ENCODE measurements at regions of chr13 and their contacts with region 1.

Region 1: DNA sequence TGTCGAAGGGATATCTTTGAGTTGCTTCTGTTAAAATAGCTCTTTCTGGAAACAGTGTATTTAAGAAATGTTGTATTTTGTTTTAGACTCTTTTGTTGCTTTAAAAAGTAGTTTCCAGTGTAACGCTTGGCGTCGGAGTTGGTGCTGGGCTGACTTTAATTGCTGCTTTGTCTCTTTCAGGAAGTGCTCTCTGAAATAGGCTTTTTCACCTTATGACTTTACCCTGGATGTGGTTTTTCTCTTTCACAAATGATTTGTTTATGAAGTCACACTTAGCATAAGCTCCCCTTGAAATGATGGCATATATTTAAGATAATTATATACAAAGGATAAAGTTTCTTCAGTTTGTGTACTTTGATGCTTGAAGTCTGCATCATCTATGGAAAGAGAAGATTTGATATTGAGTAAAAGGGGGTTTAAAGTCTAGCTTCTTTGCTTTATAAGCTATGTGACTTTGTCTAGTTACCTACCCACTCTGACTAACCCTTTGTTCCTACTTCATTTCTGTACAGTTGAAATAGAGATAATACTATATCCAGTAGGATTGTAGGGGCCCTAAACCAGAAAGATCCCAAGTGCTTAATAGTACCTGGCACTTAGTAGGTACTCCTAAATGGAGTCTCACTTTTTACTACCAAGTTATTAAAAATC is at the start of gene GPR18:
- DNase-seq: peak; percentile 62
- ATAC-seq: peak; percentile 88
- H3K4me3 Mint-ChIP-seq: peak within 1 kb of the TSS; percentile 80
- H3K27ac Mint-ChIP-seq: peak within 1 kb of the TSS; percentile 95
- H3K4me1 Mint-ChIP-seq: peaks cover 76% of the 10 kb centered on the region
- H3K27me3 Mint-ChIP-seq: no peaks in the 10 kb centered on the region
- total RNA-seq, gene GPR18: 6.0 to 9.5 TPM

Region 2: DNA sequence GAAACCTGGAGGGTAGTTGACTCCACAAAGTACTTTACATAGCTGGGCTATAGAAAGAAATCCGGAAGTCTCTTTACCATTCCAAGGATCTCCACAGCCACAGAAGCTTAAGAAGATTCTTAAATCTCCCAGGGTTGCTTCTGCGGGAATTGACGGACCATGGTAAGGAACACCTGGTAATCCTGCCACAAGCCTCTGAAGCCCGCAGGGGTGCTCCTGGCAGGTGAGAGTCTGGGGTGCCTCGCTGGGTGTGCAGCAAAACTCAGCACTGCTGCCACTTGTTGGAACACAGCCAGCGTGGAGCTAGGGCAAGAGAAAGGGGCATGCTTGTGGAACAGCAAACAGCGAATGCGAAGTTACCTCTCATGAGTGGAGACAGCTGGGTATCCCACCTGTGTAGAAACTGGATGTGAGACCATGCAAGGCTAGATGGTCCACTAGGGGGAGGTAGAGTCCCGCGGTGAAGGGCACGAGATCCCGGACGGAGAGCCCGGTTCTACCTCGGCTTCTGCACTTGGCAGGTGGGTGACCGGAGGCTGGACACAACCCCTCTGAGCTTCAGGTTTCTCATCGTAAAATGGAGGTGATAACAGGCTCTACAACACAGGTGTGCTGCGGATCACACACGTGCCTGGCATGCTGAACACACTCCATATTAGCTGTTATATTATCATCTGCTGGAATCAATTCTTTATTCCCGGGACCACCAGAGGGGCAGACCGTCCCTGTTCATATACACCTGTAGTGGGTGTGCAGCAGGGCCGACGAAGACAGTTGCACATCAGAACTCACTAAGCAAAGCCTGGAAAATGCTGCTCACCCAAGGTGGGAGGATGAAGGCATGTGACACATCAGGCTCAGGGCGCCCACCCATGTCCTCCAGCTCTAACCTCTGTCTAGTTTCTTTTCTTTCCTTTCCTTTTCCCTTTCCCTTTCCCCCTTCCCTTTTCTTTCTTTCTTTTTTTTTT is 81.7 kb before region 1 on chr13:
- CTCF ChIA-PET with region 1: interaction called, 169 read pairs
- POLR2A ChIA-PET with region 1: interaction called, 6 read pairs
- intact Hi-C with region 1: loop called in 1 of 2 experiments (anchors 2 kb)
- DNase-seq: peak; percentile 86
- ATAC-seq: peak; percentile 91
- H3K4me3 Mint-ChIP-seq: peak overlapping the region; percentile 51
- H3K27ac Mint-ChIP-seq: no peak overlapping the region
- H3K4me1 Mint-ChIP-seq: peaks cover 41% of the 10 kb centered on the region
- H3K27me3 Mint-ChIP-seq: no peaks in the 10 kb centered on the region

Region 3: DNA sequence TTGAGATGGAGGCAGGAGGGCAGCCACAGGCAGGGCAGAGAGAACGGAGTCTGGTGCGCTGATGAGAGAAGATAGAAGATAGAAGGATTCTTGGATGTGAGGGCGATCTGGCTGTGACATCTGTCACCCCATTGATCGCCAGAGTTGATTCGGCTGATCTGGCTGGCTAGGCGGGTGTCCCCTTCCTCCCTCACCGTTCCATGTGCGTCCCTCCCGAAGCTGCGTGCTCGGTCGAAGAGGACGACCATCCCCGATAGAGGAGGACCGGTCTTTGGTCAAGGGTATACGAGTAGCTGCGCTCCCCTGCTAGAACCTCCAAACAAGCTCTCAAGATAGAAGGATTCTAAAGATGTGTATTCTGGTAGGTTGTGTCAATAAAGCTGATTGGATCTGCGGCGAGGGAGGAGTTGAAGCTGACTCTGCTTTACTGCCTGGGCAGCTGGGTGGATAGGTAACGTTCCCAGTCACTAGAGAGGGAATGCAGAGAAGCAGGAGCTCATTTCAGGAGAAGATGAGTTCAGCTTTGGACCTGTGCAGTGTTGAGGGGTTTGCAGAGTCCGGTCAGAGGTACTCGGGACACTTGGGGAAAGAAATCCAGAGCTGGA is 52.6 kb before region 1 on chr13:
- CTCF ChIA-PET with region 1: interaction called, 19 read pairs
- POLR2A ChIA-PET with region 1: interaction called, 10 read pairs
- intact Hi-C with region 1: loop called (anchors 1 kb)
- DNase-seq: no peak
- ATAC-seq: no peak
- H3K4me3 Mint-ChIP-seq: peak overlapping the region; percentile 58
- H3K27ac Mint-ChIP-seq: peak overlapping the region; percentile 84
- H3K4me1 Mint-ChIP-seq: peaks cover 76% of the 10 kb centered on the region
- H3K27me3 Mint-ChIP-seq: no peaks in the 10 kb centered on the region

Region 4: DNA sequence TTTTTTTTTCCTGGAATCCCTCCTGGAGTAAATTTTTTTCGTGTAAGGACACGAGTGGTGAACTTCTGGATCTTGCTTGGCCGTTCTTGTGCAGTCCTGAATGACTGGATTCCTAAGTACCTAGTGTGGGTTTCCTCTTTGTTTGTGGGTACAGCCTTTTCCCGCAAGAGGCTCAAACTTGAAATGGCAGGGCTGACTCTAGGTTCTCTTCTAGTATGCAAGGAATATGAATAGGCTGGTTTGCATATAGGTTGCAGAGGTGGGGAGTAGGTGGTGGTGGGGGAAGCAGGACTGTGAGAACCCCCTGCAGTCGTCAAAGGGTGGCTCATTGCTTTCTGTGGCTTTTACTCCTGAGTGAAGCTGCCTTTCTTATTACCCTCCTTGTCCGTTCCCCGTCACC is 44.1 kb before region 1 on chr13:
- CTCF ChIA-PET with region 1: interaction called, 6 read pairs
- POLR2A ChIA-PET with region 1: interaction called, 8 read pairs
- intact Hi-C with region 1: loop called (anchors 1 kb)
- DNase-seq: peak; percentile 82
- ATAC-seq: peak; percentile 80
- H3K4me3 Mint-ChIP-seq: peak overlapping the region; percentile 74
- H3K27ac Mint-ChIP-seq: peak overlapping the region; percentile 87
- H3K4me1 Mint-ChIP-seq: peaks cover 79% of the 10 kb centered on the region
- H3K27me3 Mint-ChIP-seq: no peaks in the 10 kb centered on the region

Region 5: DNA sequence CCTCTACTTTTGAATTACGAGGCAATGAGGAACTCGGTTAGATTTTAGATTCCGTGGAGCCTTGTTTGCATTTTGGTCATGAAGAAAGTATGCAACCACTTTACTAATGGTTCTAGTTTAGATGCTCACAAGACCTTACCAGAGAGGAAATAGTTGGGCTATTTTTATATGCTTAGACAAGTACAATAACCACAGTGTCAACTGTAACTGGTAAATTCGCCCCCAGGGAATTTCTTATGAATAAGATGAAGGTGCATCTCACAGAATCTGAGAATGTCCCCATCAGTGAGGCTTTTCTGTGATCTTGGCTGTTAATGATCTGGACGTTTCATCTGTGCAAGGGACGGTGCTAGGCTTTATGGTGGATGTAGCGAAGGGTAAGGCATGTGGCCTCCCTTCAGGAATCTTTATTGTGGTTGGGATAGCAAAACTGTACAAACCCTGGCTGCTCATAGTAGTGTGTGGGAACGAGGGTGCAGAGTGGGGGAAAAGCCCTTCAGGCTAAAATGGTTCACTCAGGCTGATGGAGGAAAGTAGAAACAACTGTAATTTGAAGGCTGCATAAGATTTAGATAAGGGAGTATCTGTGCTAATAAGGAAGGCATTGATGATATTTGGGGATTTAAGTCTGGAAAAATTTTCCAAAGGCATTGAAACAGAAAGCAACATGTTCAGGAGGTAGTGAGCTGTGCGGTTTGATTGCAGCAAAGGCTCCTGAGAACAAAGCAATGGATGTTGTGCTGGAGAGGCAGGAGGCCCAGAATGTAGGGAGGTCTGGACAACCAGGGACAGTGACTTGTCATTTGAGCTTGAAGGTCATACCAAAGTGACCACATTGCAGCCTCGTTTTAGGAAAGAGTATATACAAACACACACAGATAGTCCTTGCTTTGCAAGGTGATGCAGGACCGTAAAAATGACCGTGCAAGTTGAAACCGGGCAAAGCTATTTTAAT is 29.3 kb before region 1 on chr13:
- CTCF ChIA-PET with region 1: interaction called, 22 read pairs
- POLR2A ChIA-PET with region 1: interaction called, 5 read pairs
- intact Hi-C with region 1: loop called in 1 of 2 experiments (anchors 2 kb)
- DNase-seq: no peak
- ATAC-seq: peak; percentile 67
- H3K4me3 Mint-ChIP-seq: peak overlapping the region; percentile 51
- H3K27ac Mint-ChIP-seq: peak overlapping the region; percentile 89
- H3K4me1 Mint-ChIP-seq: peaks cover 81% of the 10 kb centered on the region
- H3K27me3 Mint-ChIP-seq: no peaks in the 10 kb centered on the region

Region 6: GRCh38 chr13:99237981-99238662 is 20.2 kb before region 1 on chr13:
- CTCF ChIA-PET with region 1: interaction called, 7 read pairs
- POLR2A ChIA-PET with region 1: interaction called, 4 read pairs
- intact Hi-C with region 1: loop called in 1 of 2 experiments (anchors 2 kb)
- DNase-seq: peak; percentile 58
- ATAC-seq: peak; percentile 88
- H3K4me3 Mint-ChIP-seq: peak overlapping the region; percentile 64
- H3K27ac Mint-ChIP-seq: peak overlapping the region; percentile 92
- H3K4me1 Mint-ChIP-seq: peaks cover 60% of the 10 kb centered on the region
- H3K27me3 Mint-ChIP-seq: no peaks in the 10 kb centered on the region

Region 7: GRCh38 chr13:99246100-99246499 is 12.2 kb before region 1 on chr13:
- CTCF ChIA-PET with region 1: interaction called, 14 read pairs
- POLR2A ChIA-PET with region 1: no interaction called
- intact Hi-C with region 1: no loop called
- DNase-seq: no peak
- ATAC-seq: no peak
- H3K4me3 Mint-ChIP-seq: no peak overlapping the region
- H3K27ac Mint-ChIP-seq: no peak overlapping the region
- H3K4me1 Mint-ChIP-seq: peaks cover 21% of the 10 kb centered on the region
- H3K27me3 Mint-ChIP-seq: no peaks in the 10 kb centered on the region

Region 8: DNA sequence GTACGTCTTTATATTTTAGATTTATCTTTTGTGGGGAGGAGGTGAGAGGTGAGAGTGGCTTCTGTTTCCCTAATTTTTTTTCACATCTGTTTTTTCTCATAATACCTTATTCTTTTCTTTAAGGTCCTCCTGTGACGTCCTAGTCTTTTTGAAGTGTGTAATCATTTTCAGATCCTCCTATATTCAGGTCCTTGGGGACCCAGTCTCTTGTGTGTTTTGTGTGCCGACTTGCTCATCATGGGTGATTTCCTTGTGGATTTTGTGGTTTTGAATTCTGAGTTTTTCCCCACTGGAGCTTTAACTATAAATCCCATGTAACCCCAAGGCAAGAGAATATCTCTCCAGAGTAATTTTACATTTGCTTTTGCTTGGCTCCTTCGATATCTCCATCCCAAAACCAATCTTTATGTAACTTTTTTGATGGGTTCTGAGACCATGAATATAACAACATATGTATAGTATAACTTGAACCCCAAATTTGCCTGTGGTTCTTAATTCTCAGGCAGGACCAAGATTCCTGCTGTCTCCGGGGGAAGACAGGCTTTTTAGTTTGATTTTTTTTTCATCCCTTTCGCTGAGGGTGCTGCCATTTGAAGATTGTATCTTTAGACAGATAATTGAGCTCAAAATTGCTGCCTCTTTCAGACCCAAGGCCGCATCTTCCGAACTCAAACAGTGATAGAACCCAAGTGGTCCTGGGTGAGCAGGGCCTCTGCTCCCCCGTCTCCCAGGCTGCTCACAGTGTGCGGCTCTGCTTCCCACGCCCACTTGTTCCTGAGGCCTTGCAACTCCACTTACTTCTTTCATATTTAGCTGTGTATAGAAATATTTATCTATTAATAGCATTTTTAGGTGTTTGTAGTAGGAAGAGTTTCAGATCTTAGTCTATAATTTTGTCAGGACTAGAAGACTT is 108.0 kb after region 1 on chr13:
- CTCF ChIA-PET with region 1: no interaction called
- POLR2A ChIA-PET with region 1: no interaction called
- intact Hi-C with region 1: no loop called
- DNase-seq: peak; percentile 56
- ATAC-seq: no peak
- H3K4me3 Mint-ChIP-seq: peak overlapping the region; percentile 12
- H3K27ac Mint-ChIP-seq: peak overlapping the region; percentile 53
- H3K4me1 Mint-ChIP-seq: peaks cover 93% of the 10 kb centered on the region
- H3K27me3 Mint-ChIP-seq: no peaks in the 10 kb centered on the region

Measured in activated CD4-positive, alpha-beta T cell treated with anti-CD3 and anti-CD28 coated beads for 36 hours (primary cell).